PC-3 (cell line): ENCODE measurements at regions of chr5 and their contacts with region 1.

Region 1: GRCh38 chr5:83553000-83553486 is 81.5 kb downstream of the VCAN start:
- DNase-seq: no peak
- ATAC-seq: no peak
- H3K4me3 ChIP-seq: no peak overlapping the region
- H3K27ac ChIP-seq: no peak overlapping the region
- H3K4me1 ChIP-seq: peaks cover 20% of the 10 kb centered on the region
- H3K27me3 ChIP-seq: no peaks in the 10 kb centered on the region
- CTCF ChIP-seq: no peak

Region 2: GRCh38 chr5:83503662-83504061 is 49.4 kb before region 1 on chr5:
- CTCF ChIA-PET with region 1: no interaction called
- POLR2A ChIA-PET with region 1: no interaction called
- intact Hi-C with region 1: no loop called
- DNase-seq: no peak
- ATAC-seq: no peak; the same call in 1 of the 2 replicates
- H3K4me3 ChIP-seq: no peak overlapping the region
- H3K27ac ChIP-seq: no peak overlapping the region
- H3K4me1 ChIP-seq: no peaks in the 10 kb centered on the region
- H3K27me3 ChIP-seq: no peaks in the 10 kb centered on the region
- CTCF ChIP-seq: no peak

Region 3: GRCh38 chr5:83517072-83517687 is 35.9 kb before region 1 on chr5:
- CTCF ChIA-PET with region 1: interaction called, 3 read pairs
- POLR2A ChIA-PET with region 1: no interaction called
- intact Hi-C with region 1: loop called (anchors 2 kb)
- DNase-seq: peak; percentile 60
- ATAC-seq: peak; percentile 76
- H3K4me3 ChIP-seq: no peak overlapping the region
- H3K27ac ChIP-seq: peak overlapping the region; percentile 62
- H3K4me1 ChIP-seq: peaks cover 25% of the 10 kb centered on the region
- H3K27me3 ChIP-seq: no peaks in the 10 kb centered on the region
- CTCF ChIP-seq: peak; percentile 30; the same call in 1 of the 2 replicates

Region 4: GRCh38 chr5:83524991-83525390 is 28.1 kb before region 1 on chr5:
- CTCF ChIA-PET with region 1: interaction called, 11 read pairs
- POLR2A ChIA-PET with region 1: no interaction called
- intact Hi-C with region 1: no loop called
- DNase-seq: no peak
- ATAC-seq: peak; percentile 66
- H3K4me3 ChIP-seq: no peak overlapping the region
- H3K27ac ChIP-seq: no peak overlapping the region
- H3K4me1 ChIP-seq: no peaks in the 10 kb centered on the region
- H3K27me3 ChIP-seq: no peaks in the 10 kb centered on the region
- CTCF ChIP-seq: no peak

Region 5: DNA sequence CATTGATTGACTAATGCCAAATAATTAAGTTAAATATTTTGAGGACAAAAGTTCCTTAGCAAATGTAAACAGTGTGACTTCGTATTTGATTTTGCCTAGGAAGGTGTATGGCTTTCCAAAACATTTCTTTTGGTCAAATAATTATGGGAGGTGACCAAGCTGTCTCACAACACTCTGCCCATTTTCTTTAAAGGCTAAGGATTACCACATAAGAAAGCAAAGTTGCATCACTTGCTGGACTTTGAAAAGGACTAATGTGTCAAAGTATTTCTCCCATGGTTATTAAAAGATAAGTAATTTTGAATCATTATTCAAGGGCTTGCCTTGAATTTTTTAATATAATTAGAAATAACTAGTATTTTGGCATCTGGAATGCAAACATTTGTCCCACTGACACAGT is 92.9 kb after region 1 on chr5:
- CTCF ChIA-PET with region 1: no interaction called
- POLR2A ChIA-PET with region 1: no interaction called
- intact Hi-C with region 1: no loop called
- DNase-seq: no peak
- ATAC-seq: no peak
- H3K4me3 ChIP-seq: no peak overlapping the region
- H3K27ac ChIP-seq: no peak overlapping the region
- H3K4me1 ChIP-seq: no peaks in the 10 kb centered on the region
- H3K27me3 ChIP-seq: no peaks in the 10 kb centered on the region
- CTCF ChIP-seq: no peak